GM10248 (cell line): ENCODE measurements at regions of chr7 and their contacts with region 1.

Region 1: GRCh38 chr7:120805636-120806388 is 52.1 kb downstream of the TSPAN12 start:
- DNase-seq: peak; percentile 53
- CTCF ChIP-seq: peak; percentile 74

Region 2: DNA sequence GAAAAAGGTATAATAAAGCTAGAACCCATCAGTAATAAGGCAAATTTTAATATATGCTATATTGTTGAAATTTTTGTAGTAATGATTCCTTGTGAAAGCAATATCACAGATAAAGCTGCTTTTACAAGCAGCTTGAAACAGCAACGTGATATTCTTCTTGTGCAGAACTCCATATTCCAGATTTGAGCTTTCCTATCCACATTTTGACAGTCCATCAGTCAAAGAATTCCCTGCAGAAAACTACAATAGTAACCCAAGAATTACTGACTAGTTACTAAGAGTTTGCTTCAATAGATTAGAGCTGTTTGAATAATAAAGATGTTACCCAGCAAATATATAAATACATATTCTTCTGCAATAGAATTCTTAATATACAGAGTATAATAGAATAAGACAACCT is 241.7 kb before region 1 on chr7:
- CTCF ChIA-PET with region 1: no interaction called
- POLR2A ChIA-PET with region 1: no interaction called
- DNase-seq: no peak
- CTCF ChIP-seq: no peak

Region 3: GRCh38 chr7:120819863-120820262 is 14.1 kb after region 1 on chr7:
- CTCF ChIA-PET with region 1: interaction called, 11 read pairs
- POLR2A ChIA-PET with region 1: no interaction called
- DNase-seq: no peak
- CTCF ChIP-seq: peak; percentile 21

Region 4: GRCh38 chr7:120838281-120838682 is 32.5 kb after region 1 on chr7:
- CTCF ChIA-PET with region 1: interaction called, 10 read pairs
- POLR2A ChIA-PET with region 1: no interaction called
- DNase-seq: no peak
- CTCF ChIP-seq: no peak

Region 5: DNA sequence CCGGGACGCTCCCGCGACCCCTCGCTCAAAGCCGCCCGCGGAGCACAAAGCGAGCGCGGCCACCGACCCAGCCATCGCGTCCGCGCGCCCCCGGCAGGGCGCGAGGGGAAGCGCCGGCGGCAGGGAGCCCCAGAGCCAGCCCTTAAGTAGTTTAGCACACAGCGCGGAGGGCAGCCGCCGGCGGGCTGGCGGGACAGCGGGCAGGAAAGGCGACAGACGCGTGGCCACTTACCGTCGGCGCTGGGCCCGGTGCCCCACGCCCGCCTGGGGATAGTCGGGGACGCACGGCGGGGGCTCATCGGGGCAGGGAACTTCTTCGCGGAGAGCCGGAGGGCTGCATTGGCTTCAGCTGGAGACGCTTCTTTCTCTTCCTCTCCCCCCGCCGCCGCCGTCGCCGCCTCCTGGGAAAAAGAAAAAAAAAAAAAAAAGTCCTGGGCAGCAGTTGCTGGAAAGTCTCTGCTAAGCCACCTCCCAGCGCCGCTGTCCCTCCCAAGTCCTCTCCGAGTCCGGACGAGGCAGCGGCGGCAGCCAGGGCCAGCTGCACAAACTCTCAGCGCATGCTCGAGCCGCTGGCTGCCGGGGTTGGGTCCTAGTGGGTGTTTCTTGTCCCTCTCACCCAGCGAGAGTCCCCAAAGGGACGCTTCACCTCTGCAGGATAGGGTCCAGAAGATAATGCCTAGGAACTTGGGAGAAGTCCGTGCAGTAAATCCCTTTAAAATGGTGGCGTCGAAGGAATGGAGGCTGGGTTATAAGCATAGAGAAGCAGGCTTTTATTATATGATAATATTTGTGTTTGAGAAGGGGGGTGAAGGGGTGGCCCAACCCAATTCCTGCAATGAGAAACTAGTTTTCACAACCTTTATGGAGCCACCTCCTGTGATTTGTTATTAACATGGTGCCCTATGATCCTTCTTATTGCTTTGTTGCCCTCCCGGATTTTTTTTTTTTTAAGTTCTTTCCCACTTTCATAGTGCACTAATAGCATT is 52.1 kb after region 1 on chr7 and contains the start of gene TSPAN12:
- CTCF ChIA-PET with region 1: interaction called, 16 read pairs
- POLR2A ChIA-PET with region 1: no interaction called
- DNase-seq: peak; percentile 86
- CTCF ChIP-seq: peak; percentile 79

Region 6: GRCh38 chr7:120941064-120941463 is 135.3 kb after region 1 on chr7:
- CTCF ChIA-PET with region 1: interaction called, 24 read pairs
- POLR2A ChIA-PET with region 1: no interaction called
- DNase-seq: no peak
- CTCF ChIP-seq: peak; percentile 31

Region 7: GRCh38 chr7:121081327-121081936 is 275.6 kb after region 1 on chr7:
- CTCF ChIA-PET with region 1: interaction called, 16 read pairs
- POLR2A ChIA-PET with region 1: no interaction called
- DNase-seq: peak; percentile 22
- CTCF ChIP-seq: peak; percentile 46